ENCODE measurements at regions of chr2 and their contacts with region 1.

Region 1: GRCh38 chr2:32553829-32554432 is 73.9 kb upstream of the TTC27 start:
- DNase-seq: peak; percentile 64
- CTCF ChIP-seq: peak; percentile 66

Region 2: GRCh38 chr2:33395655-33396249 is 841.8 kb after region 1 on chr2:
- in situ Hi-C with region 1: loop called (anchors 25 kb)
- DNase-seq: peak; percentile 47
- CTCF ChIP-seq: peak; percentile 28

Region 3: GRCh38 chr2:33599175-33599942 is 1045.4 kb after region 1 on chr2 and contains the start of gene FAM98A:
- in situ Hi-C with region 1: loop called (anchors 25 kb)
- DNase-seq: peak; percentile 97
- CTCF ChIP-seq: no peak

Measured in GM13976 (cell line).